ENCODE measurements at regions of chr3 and their contacts with region 1.

Region 1: GRCh38 chr3:70056081-70056480 is 56.5 kb downstream of the SAMMSON start:
- DNase-seq: no peak
- H3K4me3 ChIP-seq: no peak overlapping the region
- H3K27ac ChIP-seq: no peak overlapping the region
- H3K4me1 ChIP-seq: no peaks in the 10 kb centered on the region
- H3K27me3 ChIP-seq: peaks cover 9 to 13% of the 10 kb centered on the region in 2 experiments
- CTCF ChIP-seq: no peak
- POLR2A ChIP-seq: no peak

Region 2: GRCh38 chr3:71591101-71591500 is 1535.0 kb after region 1 on chr3:
- CTCF ChIA-PET with region 1: no interaction called
- POLR2A ChIA-PET with region 1: no interaction called
- dilution Hi-C with region 1: no loop called
- intact Hi-C with region 1: loop called (anchors 5 kb)
- DNase-seq: no peak
- H3K4me3 ChIP-seq: no peak overlapping the region
- H3K27ac ChIP-seq: no peak overlapping the region
- H3K4me1 ChIP-seq: peaks cover 11% of the 10 kb centered on the region
- H3K27me3 ChIP-seq: no peaks in the 10 kb centered on the region
- CTCF ChIP-seq: no peak
- POLR2A ChIP-seq: no peak

Measured in endothelial cell of umbilical vein (primary cell).